GM12878 (cell line): ENCODE measurements at regions of chr2 and their contacts with region 1.

Region 1: DNA sequence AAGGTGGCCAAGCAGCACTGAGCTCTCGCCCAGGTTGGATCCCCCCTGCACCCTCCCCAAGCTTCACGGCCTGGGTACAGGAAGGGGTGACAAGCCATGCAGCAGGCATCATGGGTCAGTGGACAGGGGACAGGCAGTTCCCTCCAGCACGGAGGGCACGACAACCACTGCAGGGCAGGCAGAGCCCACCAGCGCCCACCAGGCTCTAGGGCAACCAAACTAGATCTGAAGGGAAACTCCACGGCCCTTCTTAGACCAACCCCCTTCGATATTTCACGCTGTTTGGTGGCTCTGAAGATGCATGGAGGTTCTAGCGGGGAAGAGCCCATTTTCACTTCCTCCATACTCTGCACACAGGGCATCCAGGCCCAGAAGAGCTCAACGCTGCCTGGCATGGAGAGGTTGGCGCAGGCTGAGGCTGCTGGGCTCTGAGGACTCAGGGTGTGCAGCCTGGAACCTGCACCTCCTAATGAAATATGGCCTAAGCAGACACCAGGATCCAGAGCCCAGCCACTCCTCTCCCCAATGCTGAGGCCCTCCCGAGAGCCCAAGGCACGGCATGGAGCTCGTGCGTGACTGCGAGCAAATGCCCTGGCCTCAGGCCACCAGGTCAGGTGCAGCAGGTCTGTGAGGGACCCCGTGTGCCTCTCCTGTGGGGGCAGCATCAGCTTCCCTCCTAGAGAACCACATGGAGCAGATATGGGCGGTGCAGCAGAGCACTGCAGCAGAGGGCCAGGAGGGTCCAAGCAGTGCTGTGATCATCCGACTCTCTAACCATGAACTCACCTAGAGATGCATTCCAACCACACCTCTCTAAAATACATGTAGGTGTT is 8.7 kb upstream of the MTERF4 start:
- DNase-seq: no peak
- ATAC-seq: peak; percentile 79
- H3K4me3 ChIP-seq: peak overlapping the region; percentile 11; the same call in 1 of the 2 replicates
- H3K27ac ChIP-seq: peak overlapping the region; percentile 82
- H3K4me1 ChIP-seq: peaks cover 33% of the 10 kb centered on the region
- H3K27me3 ChIP-seq: no peaks in the 10 kb centered on the region
- CTCF ChIP-seq: no peak
- EP300 ChIP-seq: no peak
- POLR2A ChIP-seq: peak; percentile 63
- RAD21 ChIP-seq: no peak

Region 2: GRCh38 chr2:241081643-241082340 is 29.0 kb before region 1 on chr2:
- CTCF ChIA-PET with region 1: interaction called, 10 read pairs
- POLR2A ChIA-PET with region 1: no interaction called
- RAD21 ChIA-PET with region 1: interaction called, 3 read pairs
- SMC1A ChIA-PET with region 1: interaction called, 5 read pairs
- in situ Hi-C with region 1: no loop called
- intact Hi-C with region 1: no loop called
- DNase-seq: no peak
- ATAC-seq: no peak
- H3K4me3 ChIP-seq: no peak overlapping the region
- H3K27ac ChIP-seq: no peak overlapping the region
- H3K4me1 ChIP-seq: no peaks in the 10 kb centered on the region; the same call in 1 of the 2 replicates
- H3K27me3 ChIP-seq: no peaks in the 10 kb centered on the region
- CTCF ChIP-seq: no peak
- EP300 ChIP-seq: no peak
- POLR2A ChIP-seq: 0 out of 2 replicates have a peak, but pooled peaks have one; percentile 16
- RAD21 ChIP-seq: no peak

Region 3: DNA sequence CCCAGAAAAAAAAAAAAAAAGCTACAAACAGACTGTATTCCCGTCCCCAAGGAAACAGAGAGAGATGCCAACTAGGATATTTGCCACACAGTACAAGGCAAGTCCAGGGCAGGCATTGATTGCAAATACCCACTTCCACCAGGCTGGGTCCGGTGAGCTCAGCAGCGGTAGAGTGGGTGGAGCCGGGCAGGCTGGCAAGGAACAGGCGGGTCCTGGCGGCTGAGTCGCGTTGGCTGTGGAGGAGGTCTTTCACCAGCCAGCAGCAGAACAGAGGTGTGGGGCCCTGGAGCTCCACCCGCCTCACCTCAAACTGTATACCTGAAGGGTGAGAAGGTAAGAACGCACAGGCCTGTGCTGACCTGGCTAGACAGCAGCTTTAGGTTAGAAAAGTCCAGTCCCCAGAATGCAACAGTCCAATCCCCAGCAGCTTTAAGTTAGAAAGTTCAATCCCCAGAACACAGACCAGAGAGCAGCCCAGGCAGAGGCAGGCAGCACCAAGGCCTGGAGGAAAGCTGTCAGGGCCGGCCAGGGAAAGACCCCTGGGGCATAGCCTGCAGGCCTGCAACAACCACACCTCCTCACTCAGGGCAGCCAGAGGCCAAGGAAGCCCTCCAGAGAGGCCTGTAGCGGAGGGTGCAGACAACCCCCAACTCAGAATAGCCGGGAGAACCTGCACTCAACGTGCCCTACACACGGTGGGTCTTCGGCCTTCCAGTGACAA is 13.2 kb after region 1 on chr2:
- CTCF ChIA-PET with region 1: interaction called, 10 read pairs
- POLR2A ChIA-PET with region 1: interaction called, 35 read pairs
- RAD21 ChIA-PET with region 1: interaction called, 4 read pairs
- SMC1A ChIA-PET with region 1: interaction called, 48 read pairs
- in situ Hi-C with region 1: no loop called
- intact Hi-C with region 1: loop called (anchors 1 kb)
- DNase-seq: no peak
- ATAC-seq: no peak
- H3K4me3 ChIP-seq: no peak overlapping the region
- H3K27ac ChIP-seq: no peak overlapping the region
- H3K4me1 ChIP-seq: peaks cover 35% of the 10 kb centered on the region
- H3K27me3 ChIP-seq: no peaks in the 10 kb centered on the region
- CTCF ChIP-seq: no peak
- EP300 ChIP-seq: no peak
- POLR2A ChIP-seq: no peak
- RAD21 ChIP-seq: no peak

Region 4: DNA sequence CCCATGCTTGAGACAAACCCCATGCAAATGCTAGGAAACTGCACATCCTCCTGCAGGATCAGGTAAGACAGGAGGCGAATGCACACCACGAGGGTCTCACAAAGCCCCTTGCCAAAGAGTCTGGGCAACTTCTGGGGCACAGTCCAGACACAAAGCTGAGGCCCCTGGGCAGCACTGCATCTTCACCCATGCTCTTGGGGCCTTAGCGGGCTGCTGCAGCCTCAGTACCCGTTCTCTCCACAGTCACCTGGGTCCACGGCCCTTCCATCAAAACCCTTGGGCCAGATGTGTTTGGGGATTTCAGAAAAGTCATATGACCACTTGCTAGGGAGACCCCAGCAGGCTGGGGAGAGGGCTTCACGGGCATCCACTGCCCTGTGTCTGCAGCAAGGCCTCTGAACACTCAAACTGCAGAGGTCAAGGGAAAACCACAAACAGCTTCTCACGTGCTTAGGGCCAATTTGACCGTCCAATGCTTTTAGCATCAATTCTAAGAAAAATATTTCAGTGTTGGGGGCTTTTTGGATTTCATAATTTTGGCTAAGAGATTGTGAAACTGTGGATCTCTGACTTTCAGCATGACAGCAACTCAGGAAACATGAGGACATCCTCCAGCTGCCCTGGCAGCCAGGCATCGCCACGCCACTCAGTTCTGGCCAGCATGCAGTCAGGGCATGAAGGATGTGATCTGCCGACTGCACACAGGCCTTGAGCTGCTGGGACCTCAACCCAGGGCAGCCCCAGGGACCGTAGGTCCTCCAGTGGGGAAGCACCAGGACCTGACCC is 18.5 kb after region 1 on chr2:
- CTCF ChIA-PET with region 1: interaction called, 10 read pairs
- POLR2A ChIA-PET with region 1: interaction called, 35 read pairs
- RAD21 ChIA-PET with region 1: interaction called, 4 read pairs
- SMC1A ChIA-PET with region 1: interaction called, 48 read pairs
- in situ Hi-C with region 1: no loop called
- intact Hi-C with region 1: loop called (anchors 1 kb)
- DNase-seq: no peak
- ATAC-seq: peak; percentile 32
- H3K4me3 ChIP-seq: no peak overlapping the region
- H3K27ac ChIP-seq: peak overlapping the region; percentile 97
- H3K4me1 ChIP-seq: peaks cover 43% of the 10 kb centered on the region
- H3K27me3 ChIP-seq: no peaks in the 10 kb centered on the region
- CTCF ChIP-seq: no peak
- EP300 ChIP-seq: no peak
- POLR2A ChIP-seq: no peak; the same call in 1 of the 2 replicates
- RAD21 ChIP-seq: no peak